ENCODE measurements at regions of chr6 and their contacts with region 1.

Region 1: GRCh38 chr6:148250975-148251685 is 91.5 kb upstream of the SASH1 start:
- DNase-seq: peak; percentile 42
- H3K27ac ChIP-seq: no peak overlapping the region
- CTCF ChIP-seq: peak; percentile 41

Region 2: DNA sequence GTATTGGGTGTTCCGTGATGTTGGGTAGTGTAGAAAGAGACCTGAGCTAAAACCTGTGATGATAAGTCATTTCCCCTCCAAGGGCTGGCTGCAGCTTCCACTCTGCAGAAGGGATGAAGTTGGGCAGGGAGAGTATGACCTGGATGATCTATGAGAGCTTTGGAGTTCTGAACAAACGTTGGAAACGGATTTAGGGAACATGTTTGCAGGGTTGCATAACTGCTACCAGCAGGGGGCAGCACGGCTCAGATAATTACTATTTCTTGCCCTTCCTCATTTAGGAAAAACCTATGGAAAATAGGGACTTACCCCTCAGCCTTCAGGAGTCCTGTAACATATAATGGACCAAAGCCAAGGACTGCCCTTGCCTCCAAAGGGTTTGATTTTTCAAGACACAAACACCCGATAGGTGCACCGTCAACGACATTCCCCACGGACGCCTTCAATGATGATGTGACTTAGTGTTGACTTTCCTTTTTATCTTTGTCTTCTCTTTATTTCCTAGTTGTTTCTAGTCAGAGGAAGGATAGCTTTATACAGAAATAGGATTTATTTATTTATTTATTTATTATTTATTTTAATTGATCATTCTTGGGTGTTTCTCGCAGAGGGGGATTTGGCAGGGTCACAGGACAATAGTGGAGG is 73.4 kb before region 1 on chr6:
- CTCF ChIA-PET with region 1: interaction called, 35 read pairs
- POLR2A ChIA-PET with region 1: no interaction called
- DNase-seq: peak; percentile 35
- H3K27ac ChIP-seq: no peak overlapping the region
- CTCF ChIP-seq: peak; percentile 70

Region 3: GRCh38 chr6:148440877-148441453 is 189.8 kb after region 1 on chr6:
- CTCF ChIA-PET with region 1: no interaction called
- POLR2A ChIA-PET with region 1: no interaction called
- DNase-seq: peak; percentile 75
- H3K27ac ChIP-seq: peak overlapping the region; percentile 91
- CTCF ChIP-seq: no peak